Activated CD4-positive, alpha-beta memory T cell treated with anti-CD3 and anti-CD28 coated beads for 36 hours (primary cell): ENCODE measurements at regions of chr1 and their contacts with region 1.

Region 1: DNA sequence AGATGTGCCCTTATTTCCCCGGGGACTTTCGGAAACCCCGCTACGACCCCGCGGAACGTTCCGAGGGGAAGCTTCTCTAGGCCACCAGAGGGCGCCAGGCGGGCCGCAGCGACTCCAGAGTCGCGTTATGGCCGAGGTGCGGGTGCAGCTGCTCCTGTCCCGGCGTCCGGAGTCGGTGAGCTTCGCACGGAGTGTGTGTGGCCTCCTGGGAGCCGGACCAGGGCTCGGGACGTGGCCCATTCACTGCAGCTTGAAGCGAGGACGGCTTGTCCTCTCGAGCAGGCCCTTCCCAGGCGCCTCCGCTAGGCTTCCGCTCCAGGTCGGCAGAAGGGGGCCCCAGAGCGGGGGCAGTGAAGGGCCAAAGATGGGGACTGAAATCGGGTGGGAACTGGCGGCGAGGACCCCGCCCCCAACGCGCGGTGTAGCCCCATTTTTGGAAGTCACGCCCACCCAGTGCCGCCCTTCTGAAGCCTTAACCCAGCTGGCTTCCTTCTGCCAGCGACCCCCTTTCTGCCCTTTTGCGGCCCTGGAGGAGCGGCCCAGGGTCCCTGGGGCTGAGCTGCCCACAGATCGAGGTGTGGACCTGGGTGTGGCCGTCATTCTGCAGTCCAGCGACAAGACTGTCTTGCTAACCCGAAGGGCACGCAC is at the start of gene NUDT17:
- DNase-seq: peak; percentile 80
- H3K4me3 Mint-ChIP-seq: no peak within 1 kb of the TSS
- H3K27ac Mint-ChIP-seq: peak within 1 kb of the TSS; percentile 12
- H3K4me1 Mint-ChIP-seq: peaks cover 11% of the 10 kb centered on the region
- H3K27me3 Mint-ChIP-seq: no peaks in the 10 kb centered on the region
- total RNA-seq, gene NUDT17: 2.8 to 3.8 TPM

Region 2: DNA sequence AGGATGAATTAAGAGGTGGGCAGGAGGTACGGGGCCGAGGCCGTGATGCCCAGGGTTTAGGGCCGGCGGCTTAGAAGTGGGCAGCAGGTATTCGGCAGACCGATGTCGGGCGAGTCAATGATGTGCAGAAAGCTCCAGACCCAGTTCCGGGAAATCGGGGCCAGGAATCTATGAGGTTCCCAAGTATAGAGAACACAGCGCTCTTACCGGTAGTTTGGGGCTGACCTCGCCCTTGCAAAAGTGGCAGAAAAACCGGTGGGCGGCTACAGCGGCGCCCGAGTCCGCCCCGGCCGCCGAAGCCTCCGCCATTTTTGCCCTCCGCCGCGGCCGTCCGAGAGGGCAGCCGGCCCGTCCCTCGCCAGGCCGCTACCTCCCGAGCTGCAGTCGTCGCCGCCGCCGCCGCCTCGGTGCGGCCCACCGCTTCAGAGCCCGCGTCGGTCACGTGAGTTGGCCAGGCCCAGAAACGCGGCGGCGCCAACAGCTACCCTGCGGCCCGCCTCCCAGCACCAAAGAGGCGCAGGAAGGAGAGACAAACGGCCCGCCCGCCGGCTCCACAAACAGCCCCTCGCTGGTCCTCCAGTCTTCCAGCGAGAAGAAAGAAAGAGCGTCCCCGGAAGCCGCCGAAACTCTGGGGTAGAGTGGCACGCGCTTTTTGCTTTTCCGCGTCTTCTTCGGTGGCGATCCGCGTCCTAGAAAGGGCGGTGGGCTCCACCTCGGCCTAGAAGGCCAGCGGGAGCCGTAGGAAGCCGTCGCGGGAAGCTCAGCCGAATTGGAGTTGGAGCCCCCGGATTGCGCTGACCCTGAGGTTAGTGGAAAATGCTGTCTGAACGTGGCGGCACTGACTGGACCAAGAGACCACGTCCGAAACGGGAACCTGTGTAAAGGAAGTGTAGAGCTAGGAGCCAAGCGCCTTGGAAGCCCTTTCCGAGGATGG is 21.8 kb before region 1 on chr1 and contains the starts of genes POLR3C and RNF115:
- CTCF ChIA-PET with region 1: interaction called, 154 read pairs
- POLR2A ChIA-PET with region 1: interaction called, 14 read pairs
- intact Hi-C with region 1: no loop called
- DNase-seq: peak; percentile 89
- H3K4me3 Mint-ChIP-seq: peak within 1 kb of the TSS; percentile 96
- H3K27ac Mint-ChIP-seq: peak within 1 kb of the TSS; percentile 95
- H3K4me1 Mint-ChIP-seq: peaks cover 47% of the 10 kb centered on the region
- H3K27me3 Mint-ChIP-seq: no peaks in the 10 kb centered on the region
- total RNA-seq, gene POLR3C: 27.3 to 28.9 TPM
- total RNA-seq, gene RNF115: 10.1 TPM

Region 3: DNA sequence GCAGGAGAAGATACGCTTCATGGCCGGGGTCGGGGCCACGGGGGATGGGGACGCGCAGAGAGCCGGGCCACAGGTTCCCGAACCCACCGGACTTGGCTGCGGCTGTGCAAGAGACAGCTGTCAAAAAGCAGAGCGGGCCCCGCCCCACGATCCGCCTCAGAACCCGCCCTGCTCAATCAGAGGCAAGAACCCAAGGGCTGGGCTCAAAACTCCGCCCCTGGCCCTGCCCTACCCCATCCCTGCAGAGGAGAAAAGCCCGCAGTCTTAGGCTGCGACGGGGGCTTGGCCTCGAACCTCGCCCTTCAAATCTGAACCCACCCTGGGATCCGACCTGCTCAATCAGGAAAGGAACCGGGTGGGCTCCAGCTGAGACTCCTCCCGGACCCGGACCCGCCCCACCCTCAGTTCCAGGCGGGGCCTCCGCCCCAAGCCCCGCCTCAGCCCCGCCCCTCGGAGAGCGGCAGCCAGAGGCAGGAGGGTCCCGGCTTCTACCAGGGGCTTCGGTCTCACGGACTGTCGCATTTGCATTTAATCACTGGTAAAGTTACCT is 40.2 kb after region 1 on chr1 and contains the start of gene ANKRD35:
- CTCF ChIA-PET with region 1: interaction called, 35 read pairs
- POLR2A ChIA-PET with region 1: no interaction called
- intact Hi-C with region 1: no loop called
- DNase-seq: peak; percentile 92
- H3K4me3 Mint-ChIP-seq: peak within 1 kb of the TSS; percentile 78
- H3K27ac Mint-ChIP-seq: no peak within 1 kb of the TSS
- H3K4me1 Mint-ChIP-seq: peaks cover 19% of the 10 kb centered on the region
- H3K27me3 Mint-ChIP-seq: peaks cover 18% of the 10 kb centered on the region
- total RNA-seq, gene ANKRD35: 0.24 to 0.36 TPM

Region 4: GRCh38 chr1:145906954-145907753 is 61.5 kb after region 1 on chr1:
- CTCF ChIA-PET with region 1: interaction called, 97 read pairs
- POLR2A ChIA-PET with region 1: no interaction called
- intact Hi-C with region 1: no loop called
- DNase-seq: no peak
- H3K4me3 Mint-ChIP-seq: no peak overlapping the region
- H3K27ac Mint-ChIP-seq: no peak overlapping the region
- H3K4me1 Mint-ChIP-seq: peaks cover 2% of the 10 kb centered on the region
- H3K27me3 Mint-ChIP-seq: no peaks in the 10 kb centered on the region

Region 5: GRCh38 chr1:145957443-145958319 is 112.0 kb after region 1 on chr1 and contains the start of gene LIX1L:
- CTCF ChIA-PET with region 1: interaction called, 29 read pairs
- POLR2A ChIA-PET with region 1: no interaction called
- intact Hi-C with region 1: no loop called
- DNase-seq: peak; percentile 97
- H3K4me3 Mint-ChIP-seq: peak within 1 kb of the TSS; percentile 87
- H3K27ac Mint-ChIP-seq: peak within 1 kb of the TSS; percentile 79
- H3K4me1 Mint-ChIP-seq: peaks cover 57% of the 10 kb centered on the region
- H3K27me3 Mint-ChIP-seq: no peaks in the 10 kb centered on the region
- total RNA-seq, gene LIX1L: 46.6 to 47.8 TPM

Region 6: DNA sequence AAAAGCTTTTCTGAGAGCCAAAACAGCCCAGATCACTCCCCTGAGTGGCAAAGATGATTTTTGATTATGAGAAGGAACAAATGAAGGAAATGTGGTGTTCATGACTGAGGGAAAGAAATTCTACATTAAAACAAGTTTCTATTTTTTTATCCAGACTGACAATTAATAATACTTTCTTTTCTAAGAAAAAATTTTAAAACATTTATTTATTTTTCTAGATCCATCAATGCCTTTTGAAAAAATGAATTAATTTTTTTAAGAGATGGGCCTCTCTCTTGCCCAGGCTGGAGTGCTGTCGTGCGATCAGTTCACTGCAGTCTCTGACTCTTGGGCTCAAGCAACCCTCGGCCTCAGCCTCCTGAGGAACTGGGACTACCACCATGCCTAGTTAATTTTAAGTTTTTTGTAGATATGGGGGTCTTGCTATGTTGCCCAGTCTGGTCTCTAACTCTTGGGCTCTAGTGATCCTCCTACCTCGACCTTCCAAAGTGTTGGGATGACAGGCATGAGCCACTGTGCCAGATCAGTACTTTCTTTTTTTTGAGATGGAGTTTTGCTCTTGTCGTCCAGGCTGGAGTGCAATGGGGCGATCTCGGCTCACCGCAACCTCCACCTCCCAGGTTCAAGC is 162.0 kb after region 1 on chr1:
- CTCF ChIA-PET with region 1: interaction called, 36 read pairs
- POLR2A ChIA-PET with region 1: no interaction called
- intact Hi-C with region 1: no loop called
- DNase-seq: no peak
- H3K4me3 Mint-ChIP-seq: no peak overlapping the region
- H3K27ac Mint-ChIP-seq: peak overlapping the region; percentile 76
- H3K4me1 Mint-ChIP-seq: peaks cover 40% of the 10 kb centered on the region
- H3K27me3 Mint-ChIP-seq: no peaks in the 10 kb centered on the region

Region 7: GRCh38 chr1:146019231-146020057 is 173.8 kb after region 1 on chr1:
- CTCF ChIA-PET with region 1: interaction called, 19 read pairs
- POLR2A ChIA-PET with region 1: no interaction called
- intact Hi-C with region 1: no loop called
- DNase-seq: no peak
- H3K4me3 Mint-ChIP-seq: peak overlapping the region; percentile 6
- H3K27ac Mint-ChIP-seq: no peak overlapping the region
- H3K4me1 Mint-ChIP-seq: peaks cover 8% of the 10 kb centered on the region
- H3K27me3 Mint-ChIP-seq: peaks cover 29% of the 10 kb centered on the region